Mammary epithelial cell (primary cell): ENCODE measurements at regions of chr7 and their contacts with region 1.

Region 1: DNA sequence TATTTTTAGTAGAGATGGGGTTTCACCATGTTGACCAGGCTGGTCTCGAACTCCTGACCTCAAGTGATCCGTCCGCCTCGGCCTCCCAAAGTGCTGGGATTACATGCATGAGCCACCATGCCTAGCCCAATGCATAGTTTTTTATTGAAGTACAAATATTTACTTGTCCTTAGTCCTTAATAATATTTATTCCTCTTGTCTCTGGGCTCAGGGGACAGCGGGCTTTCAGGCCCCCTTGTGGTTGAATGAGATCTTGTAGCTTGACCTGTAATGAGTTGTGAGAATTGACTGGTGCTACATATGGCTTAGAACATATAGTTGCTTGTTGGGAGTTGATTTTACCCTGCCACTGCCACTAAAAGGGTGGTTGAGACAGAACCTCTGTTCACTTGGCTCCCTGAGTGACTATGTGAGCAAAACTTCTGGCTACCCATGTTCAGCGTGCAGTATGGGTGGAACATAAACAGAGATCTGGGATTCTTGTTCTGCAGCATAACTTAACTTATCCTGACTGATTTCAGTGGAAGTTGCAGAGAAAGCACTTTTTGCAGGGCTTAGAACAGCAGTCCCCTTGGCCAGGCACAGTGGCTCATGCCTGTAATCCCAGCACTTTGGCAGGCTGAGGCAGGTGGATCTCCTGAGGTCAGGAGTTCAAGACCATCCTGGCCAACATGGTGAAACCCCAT is 14.9 kb downstream of the CCL26 start:
- DNase-seq: no peak
- H3K4me3 ChIP-seq: no peak overlapping the region
- H3K27ac ChIP-seq: no peak overlapping the region
- H3K4me1 ChIP-seq: no peaks in the 10 kb centered on the region
- H3K27me3 ChIP-seq: no peaks in the 10 kb centered on the region
- CTCF ChIP-seq: peak; percentile 38 to 45

Region 2: GRCh38 chr7:75667938-75668337 is 89.2 kb before region 1 on chr7:
- CTCF ChIA-PET with region 1: no interaction called
- dilution Hi-C with region 1: loop called (anchors 5 kb)
- in situ Hi-C with region 1: no loop called
- intact Hi-C with region 1: no loop called
- DNase-seq: no peak
- H3K4me3 ChIP-seq: no peak overlapping the region
- H3K27ac ChIP-seq: no peak overlapping the region
- H3K4me1 ChIP-seq: no peaks in the 10 kb centered on the region
- H3K27me3 ChIP-seq: no peaks in the 10 kb centered on the region
- CTCF ChIP-seq: no peak

Region 3: DNA sequence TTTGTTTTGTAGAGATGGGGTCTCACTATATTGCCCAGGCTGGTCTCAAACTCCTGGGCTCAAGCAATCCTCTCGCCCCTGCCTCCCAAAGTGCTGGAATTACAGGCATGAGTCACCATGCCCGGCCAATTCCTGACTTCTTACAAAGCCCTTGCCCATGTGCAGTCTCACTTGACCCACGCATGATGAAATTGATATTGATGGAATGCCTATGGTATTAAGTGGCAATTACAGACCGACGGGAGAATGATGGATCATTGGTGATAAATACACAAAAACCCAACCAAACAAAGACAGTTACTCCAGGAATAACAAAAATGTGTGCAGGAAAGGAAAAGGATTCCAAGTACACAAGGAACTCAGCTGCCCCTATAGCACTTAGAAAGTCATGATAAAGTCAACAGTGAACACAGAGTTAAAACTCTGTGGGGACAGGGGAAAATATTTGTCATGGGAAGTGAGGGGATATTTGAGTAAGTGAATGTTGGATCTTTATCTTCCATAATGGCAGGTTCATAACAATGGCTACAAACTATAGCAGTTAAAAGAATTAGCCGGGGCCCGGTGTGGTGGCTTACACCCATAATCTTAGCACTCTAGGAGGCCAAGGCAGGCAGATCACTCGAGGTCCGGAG is 40.0 kb before region 1 on chr7:
- CTCF ChIA-PET with region 1: no interaction called
- dilution Hi-C with region 1: loop called (anchors 5 kb)
- in situ Hi-C with region 1: no loop called
- intact Hi-C with region 1: no loop called
- DNase-seq: peak; percentile 44
- H3K4me3 ChIP-seq: no peak overlapping the region
- H3K27ac ChIP-seq: no peak overlapping the region
- H3K4me1 ChIP-seq: peaks cover 4% of the 10 kb centered on the region
- H3K27me3 ChIP-seq: no peaks in the 10 kb centered on the region
- CTCF ChIP-seq: no peak

Region 4: GRCh38 chr7:75819711-75820110 is 62.6 kb after region 1 on chr7:
- CTCF ChIA-PET with region 1: no interaction called
- dilution Hi-C with region 1: loop called (anchors 5 kb)
- in situ Hi-C with region 1: no loop called
- intact Hi-C with region 1: no loop called
- DNase-seq: no peak
- H3K4me3 ChIP-seq: no peak overlapping the region
- H3K27ac ChIP-seq: no peak overlapping the region
- H3K4me1 ChIP-seq: no peaks in the 10 kb centered on the region
- H3K27me3 ChIP-seq: no peaks in the 10 kb centered on the region
- CTCF ChIP-seq: no peak

Region 5: DNA sequence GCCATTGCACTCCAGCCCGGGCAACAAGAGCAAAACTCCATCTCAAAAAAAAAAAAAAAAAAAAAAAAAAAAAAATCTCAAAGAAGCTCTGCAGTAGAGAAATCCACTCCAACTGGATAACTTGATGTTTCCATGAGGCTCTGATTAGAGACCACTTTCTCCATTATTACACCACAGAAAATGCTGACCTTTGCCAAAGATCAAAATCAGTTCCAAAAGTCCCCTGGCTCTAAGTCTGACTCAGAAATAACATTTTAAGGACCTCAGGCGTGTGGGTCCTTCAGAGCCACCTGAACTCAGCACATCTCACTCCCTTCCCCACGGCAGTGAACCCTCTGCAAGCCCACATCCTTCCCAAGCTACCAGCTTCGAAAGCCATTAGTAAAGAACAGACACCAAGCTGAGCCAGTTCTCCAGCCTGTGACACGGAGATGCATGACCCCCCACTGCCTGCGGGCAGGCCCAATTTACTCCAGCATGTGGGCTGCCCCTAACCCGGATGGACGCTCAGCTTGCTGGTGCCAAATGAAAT is 251.1 kb after region 1 on chr7:
- CTCF ChIA-PET with region 1: no interaction called
- dilution Hi-C with region 1: loop called (anchors 10 kb)
- in situ Hi-C with region 1: no loop called
- intact Hi-C with region 1: no loop called
- DNase-seq: no peak
- H3K4me3 ChIP-seq: no peak overlapping the region
- H3K27ac ChIP-seq: no peak overlapping the region
- H3K4me1 ChIP-seq: no peaks in the 10 kb centered on the region
- H3K27me3 ChIP-seq: no peaks in the 10 kb centered on the region
- CTCF ChIP-seq: no peak